ENCODE measurements at regions of chr17 and their contacts with region 1.

Region 1: GRCh38 chr17:75632863-75633485 is at the start of gene SMIM5:
- DNase-seq: peak; percentile 94
- ATAC-seq: peak; percentile 71
- H3K4me3 Mint-ChIP-seq: peak within 1 kb of the TSS; percentile 24; the same call in 1 of the 2 replicates
- H3K27ac Mint-ChIP-seq: peak within 1 kb of the TSS; percentile 63; the same call in 1 of the 2 replicates
- H3K4me1 Mint-ChIP-seq: peaks cover 11% of the 10 kb centered on the region
- H3K27me3 Mint-ChIP-seq: no peaks in the 10 kb centered on the region
- CTCF ChIP-seq: peak; percentile 94
- total RNA-seq, gene SMIM5: 0.05 TPM in 1 of 3 replicates, not detected in the others

Region 2: GRCh38 chr17:75524953-75525719 is 107.8 kb before region 1 on chr17 and contains the start of gene LLGL2:
- CTCF ChIA-PET with region 1: interaction called, 21 read pairs
- POLR2A ChIA-PET with region 1: no interaction called
- DNase-seq: peak; percentile 87
- ATAC-seq: peak; percentile 89
- H3K4me3 Mint-ChIP-seq: peak within 1 kb of the TSS; percentile 83
- H3K27ac Mint-ChIP-seq: peak within 1 kb of the TSS; percentile 80
- H3K4me1 Mint-ChIP-seq: peaks cover 17% of the 10 kb centered on the region
- H3K27me3 Mint-ChIP-seq: 0 out of 2 replicates have a peak, but pooled peaks cover 3% of the 10 kb centered on the region
- CTCF ChIP-seq: no peak; the same call in 1 of the 2 replicates
- total RNA-seq, gene LLGL2: 94.3 to 103 TPM (median 97.0 TPM) in 3 replicates

Region 3: DNA sequence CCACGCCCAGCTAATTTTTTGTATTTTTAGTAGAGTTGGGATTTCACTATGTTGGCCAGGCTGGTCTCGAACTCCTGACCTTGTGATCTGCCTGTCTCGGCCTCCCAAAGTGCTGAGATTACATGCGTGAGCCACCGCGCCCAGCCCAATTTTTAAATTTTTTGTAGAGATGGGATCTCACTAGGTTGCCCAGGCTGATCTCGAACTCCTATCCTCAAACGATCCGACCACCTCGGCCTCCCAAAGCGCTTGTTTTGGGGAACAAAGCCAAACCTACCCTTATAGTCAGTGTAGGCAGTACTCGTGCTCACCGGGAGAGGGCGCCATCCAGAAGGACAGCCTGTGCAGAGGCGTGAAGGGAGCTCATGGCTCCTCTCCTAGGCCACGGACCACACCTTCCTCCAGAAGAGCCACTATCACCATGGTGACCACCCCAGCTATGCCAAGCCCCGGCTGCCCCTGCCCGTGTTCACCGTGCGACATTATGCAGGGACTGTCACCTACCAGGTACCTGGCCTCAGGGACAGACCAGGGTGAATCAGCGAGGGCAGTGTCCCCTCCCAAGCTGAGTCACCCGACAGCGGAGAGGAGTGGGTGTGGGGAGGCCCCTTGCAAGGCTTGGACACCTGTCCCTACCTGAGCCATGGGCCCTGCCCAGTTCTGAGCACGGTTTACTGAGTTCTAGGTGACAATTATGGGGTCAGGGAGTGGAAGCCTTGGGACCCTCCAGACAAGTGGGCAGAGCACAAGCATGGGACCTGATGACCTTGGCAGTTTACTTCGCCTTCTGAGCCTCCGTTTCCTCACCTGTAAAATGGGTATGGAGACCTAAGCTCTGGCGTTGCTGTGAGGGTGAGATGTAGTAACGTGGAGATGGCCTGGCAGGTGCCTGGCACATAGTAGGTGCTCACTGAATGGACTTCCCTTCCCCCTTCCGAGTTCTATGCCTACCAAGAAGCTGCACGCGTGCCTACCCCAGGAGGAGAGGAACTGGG is 31.6 kb before region 1 on chr17:
- CTCF ChIA-PET with region 1: interaction called, 133 read pairs
- POLR2A ChIA-PET with region 1: interaction called, 3 read pairs
- DNase-seq: peak; percentile 94
- ATAC-seq: peak; percentile 96
- H3K4me3 Mint-ChIP-seq: no peak overlapping the region
- H3K27ac Mint-ChIP-seq: no peak overlapping the region
- H3K4me1 Mint-ChIP-seq: no peaks in the 10 kb centered on the region
- H3K27me3 Mint-ChIP-seq: no peaks in the 10 kb centered on the region
- CTCF ChIP-seq: peak; percentile 96

Region 4: GRCh38 chr17:75673487-75673886 is 40.5 kb after region 1 on chr17:
- CTCF ChIA-PET with region 1: interaction called, 23 read pairs
- POLR2A ChIA-PET with region 1: interaction called, 3 read pairs
- DNase-seq: no peak
- ATAC-seq: no peak
- H3K4me3 Mint-ChIP-seq: no peak overlapping the region
- H3K27ac Mint-ChIP-seq: 0 out of 2 replicates have a peak overlapping the region, but pooled peaks have one; percentile 32
- H3K4me1 Mint-ChIP-seq: peaks cover 1% of the 10 kb centered on the region
- H3K27me3 Mint-ChIP-seq: no peaks in the 10 kb centered on the region
- CTCF ChIP-seq: no peak

Region 5: DNA sequence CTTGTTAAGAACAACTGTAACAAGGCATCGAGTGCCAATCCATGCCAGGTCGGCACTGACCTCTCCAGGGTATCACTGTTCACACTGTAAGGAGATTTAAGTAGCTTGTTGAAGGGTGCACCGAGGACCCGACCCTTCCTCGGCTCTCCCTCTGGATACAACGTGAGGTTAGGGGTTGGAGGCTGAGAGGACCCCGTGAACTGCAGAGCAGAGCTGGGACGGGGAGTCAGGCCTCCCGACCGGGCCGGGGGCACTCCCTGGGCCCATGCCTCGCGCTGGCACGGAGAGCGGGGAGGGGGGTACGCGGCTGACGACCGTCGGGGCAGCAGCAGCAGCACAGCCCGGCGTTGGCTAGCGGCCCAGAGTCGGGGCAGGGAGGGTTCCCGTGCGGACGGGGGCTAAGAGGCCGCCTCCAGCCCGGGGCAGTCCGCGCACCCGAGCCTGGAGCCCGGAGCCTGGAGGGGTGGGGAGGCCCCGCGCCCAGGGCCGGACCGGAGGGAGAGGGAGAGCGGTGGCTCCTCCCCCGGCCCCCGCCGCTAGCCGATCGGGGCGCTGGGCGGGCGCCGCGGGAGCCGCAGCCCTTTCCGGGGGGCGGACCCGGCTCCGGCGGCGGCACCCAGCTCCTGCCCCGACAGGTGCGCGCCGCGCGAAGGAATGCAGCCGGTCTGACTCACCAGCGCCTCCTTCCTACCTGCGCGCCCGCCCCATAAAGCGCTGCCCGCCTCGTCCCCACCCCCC is 87.9 kb after region 1 on chr17 and contains the start of gene ITGB4:
- CTCF ChIA-PET with region 1: interaction called, 47 read pairs
- POLR2A ChIA-PET with region 1: no interaction called
- DNase-seq: peak; percentile 87
- ATAC-seq: peak; percentile 84
- H3K4me3 Mint-ChIP-seq: peak within 1 kb of the TSS; percentile 83
- H3K27ac Mint-ChIP-seq: peak within 1 kb of the TSS; percentile 94
- H3K4me1 Mint-ChIP-seq: peaks cover 7% of the 10 kb centered on the region
- H3K27me3 Mint-ChIP-seq: peaks cover 22% of the 10 kb centered on the region
- CTCF ChIP-seq: no peak
- total RNA-seq, gene ITGB4: 9.5 to 11.2 TPM (median 10.6 TPM) in 3 replicates

Region 6: DNA sequence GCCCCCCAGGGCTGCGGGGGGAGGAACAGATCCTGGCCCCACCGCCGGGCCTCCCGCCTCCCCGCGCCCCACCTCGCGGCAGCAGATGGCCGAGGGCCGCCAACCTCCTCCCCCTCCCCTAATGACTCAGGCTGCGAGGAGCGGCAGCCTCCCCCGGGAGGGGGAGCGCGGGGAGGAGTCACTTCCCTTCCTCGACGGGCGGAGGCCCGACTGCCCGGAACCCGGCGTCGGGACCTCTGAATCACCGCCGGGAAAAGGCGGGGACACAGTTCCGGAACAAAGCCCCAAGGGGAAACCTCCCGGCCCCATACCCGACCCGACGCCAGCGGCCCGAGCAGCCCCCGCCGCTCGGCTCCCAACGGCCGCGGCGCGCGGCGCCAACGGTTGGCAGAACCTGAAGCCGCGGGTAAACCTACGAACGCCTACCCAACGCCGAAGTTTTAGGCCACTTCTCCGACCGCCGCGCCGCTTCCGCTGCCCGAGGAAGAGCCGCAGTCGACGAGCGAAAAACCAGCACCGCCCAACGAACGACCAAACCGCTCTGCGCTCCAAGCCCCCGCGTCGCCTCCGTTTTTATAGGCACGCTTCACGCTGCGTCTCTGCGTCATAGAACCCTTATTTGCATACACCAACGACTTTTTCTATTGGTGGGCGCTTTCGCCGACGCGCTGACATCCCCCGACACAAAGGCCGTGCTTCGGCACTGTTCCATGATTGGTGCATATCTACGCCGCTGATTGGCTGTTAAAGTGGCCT is 146.4 kb after region 1 on chr17:
- CTCF ChIA-PET with region 1: interaction called, 17 read pairs
- POLR2A ChIA-PET with region 1: interaction called, 3 read pairs
- DNase-seq: peak; percentile 94
- ATAC-seq: peak; percentile 85
- H3K4me3 Mint-ChIP-seq: peak overlapping the region; percentile 94
- H3K27ac Mint-ChIP-seq: peak overlapping the region; percentile 99
- H3K4me1 Mint-ChIP-seq: peaks cover 46% of the 10 kb centered on the region
- H3K27me3 Mint-ChIP-seq: peaks cover 4% of the 10 kb centered on the region
- CTCF ChIP-seq: 0 out of 2 replicates have a peak, but pooled peaks have one; percentile 11

Measured in WTC11 (cell line).